ENCODE measurements at regions of chr10 and their contacts with region 1.

Region 1: GRCh38 chr10:119596537-119597404 is at the start of gene TIAL1:
- DNase-seq: peak; percentile 99
- H3K4me3 ChIP-seq: peak within 1 kb of the TSS; percentile 84 to 96 (median 91)
- H3K27ac ChIP-seq: peak within 1 kb of the TSS; percentile 96 to 99 (median 97)
- H3K4me1 ChIP-seq: peaks cover 41 to 48% (median 47%) of the 10 kb centered on the region in 4 donors
- H3K27me3 ChIP-seq: no peaks in the 10 kb centered on the region
- CTCF ChIP-seq: peak in 1 of 3 experiments; percentile 10
- EP300 ChIP-seq: no peak
- POLR2A ChIP-seq: peak; percentile 45
- total RNA-seq, gene TIAL1: 49.9 to 78.1 (median 52.9) TPM

Region 2: DNA sequence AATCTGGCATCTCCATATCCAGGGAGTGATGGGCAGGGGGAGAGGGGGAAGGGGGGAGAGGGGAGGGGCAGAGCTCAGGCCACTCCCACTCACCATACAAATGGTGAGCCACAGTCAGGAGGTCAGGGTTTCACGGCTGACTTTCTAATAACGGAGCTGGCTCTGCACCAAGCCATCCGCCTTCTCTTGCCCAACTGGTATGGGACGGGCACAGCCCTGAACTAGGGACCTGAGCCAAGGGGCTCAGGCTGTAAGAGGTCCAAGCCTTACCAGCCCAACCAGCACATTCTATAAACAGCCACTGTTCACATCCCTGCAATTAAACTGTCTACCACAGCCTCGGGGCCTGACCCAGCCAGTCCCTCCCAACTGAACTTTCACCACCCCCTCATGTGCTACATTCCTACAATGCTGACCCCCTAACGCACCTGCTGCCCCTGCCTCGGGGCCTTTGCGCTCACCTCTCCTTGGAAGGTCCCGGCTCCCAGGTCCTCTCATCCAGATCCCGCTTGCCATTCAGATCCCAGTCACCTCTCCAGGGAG is 86.8 kb before region 1 on chr10:
- intact Hi-C with region 1: no loop called
- DNase-seq: no peak
- H3K4me3 ChIP-seq: no peak overlapping the region
- H3K27ac ChIP-seq: no peak overlapping the region
- H3K4me1 ChIP-seq: peaks cover 7 to 23% (median 22%) of the 10 kb centered on the region in 4 donors
- H3K27me3 ChIP-seq: no peaks in the 10 kb centered on the region
- CTCF ChIP-seq: no peak
- EP300 ChIP-seq: no peak
- POLR2A ChIP-seq: no peak

Region 3: DNA sequence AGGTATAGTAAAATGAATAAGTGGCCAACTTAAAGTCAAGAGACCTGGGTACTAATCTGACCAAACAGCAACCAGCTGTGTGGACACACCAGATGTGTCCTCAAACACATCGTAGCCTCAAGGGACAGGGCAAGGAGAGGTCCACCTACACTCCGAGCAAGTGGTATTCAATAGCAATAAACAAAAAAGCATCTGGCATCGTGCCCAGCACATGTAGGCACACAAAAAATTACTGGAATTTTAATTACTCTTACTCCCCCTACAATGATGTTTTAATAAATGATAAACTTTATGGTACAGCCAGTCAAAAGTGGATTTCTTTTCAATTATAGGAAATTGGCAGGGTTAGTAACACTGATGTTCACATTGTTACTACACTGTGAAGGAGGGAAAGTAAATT is 50.8 kb before region 1 on chr10:
- intact Hi-C with region 1: loop called (anchors 5 kb)
- DNase-seq: no peak
- H3K4me3 ChIP-seq: no peak overlapping the region
- H3K27ac ChIP-seq: no peak overlapping the region
- H3K4me1 ChIP-seq: peaks cover 13 to 39% (median 35%) of the 10 kb centered on the region in 4 donors
- H3K27me3 ChIP-seq: peaks cover 0 to 3% (median 0%) of the 10 kb centered on the region in 4 donors
- CTCF ChIP-seq: no peak
- EP300 ChIP-seq: no peak
- POLR2A ChIP-seq: no peak

Region 4: DNA sequence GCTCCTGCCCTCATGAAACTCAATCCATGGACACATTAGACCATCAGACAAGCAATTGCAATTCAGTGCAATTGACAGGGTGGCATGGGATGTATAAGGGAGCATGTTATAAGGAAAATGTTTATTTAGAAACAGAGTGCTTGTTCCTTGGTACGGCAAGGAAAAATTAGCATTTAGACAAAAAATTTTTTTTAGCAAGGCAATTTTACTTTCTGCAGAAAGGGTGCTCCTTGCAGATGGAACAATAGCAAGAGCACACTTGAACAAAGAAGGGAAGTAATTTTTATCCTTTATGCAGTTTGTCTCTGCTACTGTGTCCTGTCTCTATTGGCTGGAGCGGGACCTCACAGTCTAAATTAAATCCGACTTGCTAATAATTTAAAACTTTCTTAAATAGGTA is 48.2 kb after region 1 on chr10:
- intact Hi-C with region 1: loop called (anchors 5 kb)
- DNase-seq: no peak
- H3K4me3 ChIP-seq: no peak overlapping the region
- H3K27ac ChIP-seq: no peak overlapping the region
- H3K4me1 ChIP-seq: no peaks in the 10 kb centered on the region
- H3K27me3 ChIP-seq: no peaks in the 10 kb centered on the region
- CTCF ChIP-seq: no peak
- EP300 ChIP-seq: no peak
- POLR2A ChIP-seq: no peak

Region 5: DNA sequence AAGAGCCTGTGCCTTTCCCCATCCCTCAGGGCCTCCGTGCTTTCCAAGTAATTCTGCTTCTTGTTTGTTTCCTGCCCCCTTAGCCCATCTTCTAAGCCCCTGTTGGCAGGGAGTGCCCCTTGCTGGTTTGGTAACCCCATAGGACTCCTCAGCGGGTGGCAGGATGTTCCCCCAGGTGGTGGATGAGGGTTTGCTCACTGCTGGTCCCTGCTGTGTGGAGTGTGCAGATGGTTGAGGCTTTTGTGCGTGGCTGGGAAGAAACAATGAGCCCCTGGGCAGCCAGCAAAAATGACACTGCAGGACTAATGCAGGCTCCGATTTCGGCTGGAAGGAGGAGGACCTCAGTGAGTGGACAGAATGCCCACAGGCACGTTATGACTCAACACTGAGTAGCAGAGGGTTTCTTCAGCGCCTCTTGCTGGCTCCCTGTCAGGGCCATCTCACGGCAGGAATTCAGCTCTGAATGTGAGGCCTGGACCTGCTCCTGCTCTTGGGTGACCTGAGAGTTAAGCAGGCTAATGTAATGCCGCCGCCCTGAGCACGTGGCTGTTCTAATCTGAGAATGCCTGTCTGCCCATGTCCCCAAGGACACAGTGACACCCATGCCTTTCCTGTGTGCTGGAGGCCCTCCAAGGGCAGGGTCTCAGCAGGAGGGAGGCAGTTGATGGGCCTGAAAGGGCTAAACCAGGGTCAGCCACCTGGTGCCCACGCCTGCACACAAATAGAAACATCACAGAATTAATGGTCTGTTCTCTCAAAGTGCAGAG is 71.0 kb after region 1 on chr10:
- intact Hi-C with region 1: no loop called
- DNase-seq: no peak
- H3K4me3 ChIP-seq: peak overlapping the region in 2 of 4 donors; percentile 2 to 8
- H3K27ac ChIP-seq: peak overlapping the region; percentile 63 to 83 (median 74)
- H3K4me1 ChIP-seq: peaks cover 65 to 80% (median 72%) of the 10 kb centered on the region in 4 donors
- H3K27me3 ChIP-seq: no peaks in the 10 kb centered on the region
- CTCF ChIP-seq: no peak
- EP300 ChIP-seq: no peak
- POLR2A ChIP-seq: no peak

Region 6: DNA sequence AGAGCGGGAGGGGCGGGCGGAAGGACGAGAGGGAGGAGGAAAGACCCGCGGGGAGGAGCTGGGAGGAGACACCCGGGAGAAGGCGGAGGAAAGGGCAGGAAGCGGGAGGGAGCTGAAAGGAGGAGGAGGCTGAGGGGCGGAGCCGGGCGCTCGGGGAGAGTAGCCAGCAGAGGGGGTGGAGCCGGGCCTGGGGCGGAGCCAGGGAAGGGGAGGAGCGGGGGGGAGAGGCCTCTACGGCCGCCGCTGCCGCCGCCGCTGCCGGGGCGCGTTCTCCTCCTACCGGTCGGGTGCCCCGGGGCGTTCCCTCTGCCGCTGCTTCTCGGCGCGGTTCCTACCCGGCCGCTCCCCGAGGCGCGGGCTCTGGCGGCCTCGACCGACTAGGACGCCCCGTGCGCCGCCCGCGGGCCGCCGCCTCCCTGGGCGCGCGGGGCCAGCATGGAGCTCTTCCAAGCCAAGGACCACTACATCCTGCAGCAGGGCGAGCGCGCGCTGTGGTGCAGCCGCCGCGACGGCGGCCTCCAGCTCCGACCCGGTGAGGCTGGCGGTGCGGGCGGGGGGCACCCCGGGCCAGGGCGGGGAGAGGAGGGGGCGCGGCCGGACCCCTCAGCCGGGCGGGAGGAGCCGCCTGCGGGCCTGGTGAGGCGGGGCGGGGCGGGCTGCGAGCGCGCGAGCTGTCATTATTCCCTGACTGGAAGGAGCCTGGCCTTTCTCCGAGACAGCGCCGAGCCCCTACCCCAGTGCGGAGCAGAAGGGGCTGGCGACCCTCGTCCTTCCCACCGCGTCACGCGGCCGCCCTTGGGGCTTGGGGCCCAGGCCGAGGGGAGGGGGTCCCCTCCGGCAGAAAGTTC is 129.3 kb after region 1 on chr10 and contains the start of gene INPP5F:
- intact Hi-C with region 1: loop called (anchors 5 kb)
- DNase-seq: peak; percentile 99
- H3K4me3 ChIP-seq: peak within 1 kb of the TSS; percentile 69 to 97 (median 95)
- H3K27ac ChIP-seq: peak within 1 kb of the TSS; percentile 90 to 97 (median 96)
- H3K4me1 ChIP-seq: peaks cover 28 to 45% (median 38%) of the 10 kb centered on the region in 4 donors
- H3K27me3 ChIP-seq: no peaks in the 10 kb centered on the region
- CTCF ChIP-seq: peak; percentile 18 to 38 (median 26)
- EP300 ChIP-seq: no peak
- POLR2A ChIP-seq: no peak
- total RNA-seq, gene INPP5F: 15.1 to 24.0 (median 19.0) TPM

Measured in esophagus muscularis mucosa (tissue), 4 donors.